ENCODE measurements at regions of chr20 and their contacts with region 1.

Region 1: GRCh38 chr20:1764136-1765033 is 106.8 kb upstream of the SIRPG start:
- DNase-seq: peak; percentile 78
- H3K4me3 Mint-ChIP-seq: no peak overlapping the region
- H3K27ac Mint-ChIP-seq: no peak overlapping the region
- H3K4me1 Mint-ChIP-seq: peaks cover 3% of the 10 kb centered on the region
- H3K27me3 Mint-ChIP-seq: peaks cover 4% of the 10 kb centered on the region

Region 2: GRCh38 chr20:1509237-1509636 is 255.1 kb before region 1 on chr20:
- CTCF ChIA-PET with region 1: interaction called, 13 read pairs
- POLR2A ChIA-PET with region 1: no interaction called
- intact Hi-C with region 1: no loop called
- DNase-seq: peak; percentile 39
- H3K4me3 Mint-ChIP-seq: no peak overlapping the region
- H3K27ac Mint-ChIP-seq: no peak overlapping the region
- H3K4me1 Mint-ChIP-seq: no peaks in the 10 kb centered on the region
- H3K27me3 Mint-ChIP-seq: peaks cover 9% of the 10 kb centered on the region

Region 3: DNA sequence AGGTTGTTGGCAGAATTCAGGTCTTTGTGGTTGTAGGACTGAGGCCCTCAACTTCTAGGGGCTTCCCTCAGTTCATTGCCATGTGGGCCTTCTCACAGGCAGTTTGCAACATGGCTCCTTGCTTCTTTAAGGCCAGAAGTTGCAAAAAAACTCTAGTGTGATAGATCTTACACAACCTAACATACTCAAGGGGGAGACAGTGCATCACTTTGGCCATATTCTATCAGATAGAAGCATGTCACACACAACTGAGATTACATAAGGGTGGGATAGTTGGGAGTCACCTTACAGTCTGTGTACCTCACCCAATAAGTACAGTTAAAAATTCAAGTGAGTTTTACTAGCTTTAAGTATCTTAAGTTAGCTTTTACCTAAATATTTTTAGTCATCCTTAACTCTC is 208.4 kb before region 1 on chr20:
- CTCF ChIA-PET with region 1: interaction called, 14 read pairs
- POLR2A ChIA-PET with region 1: no interaction called
- intact Hi-C with region 1: no loop called
- DNase-seq: no peak
- H3K4me3 Mint-ChIP-seq: no peak overlapping the region
- H3K27ac Mint-ChIP-seq: no peak overlapping the region
- H3K4me1 Mint-ChIP-seq: peaks cover 3% of the 10 kb centered on the region
- H3K27me3 Mint-ChIP-seq: no peaks in the 10 kb centered on the region

Region 4: GRCh38 chr20:1752045-1752444 is 12.3 kb before region 1 on chr20:
- CTCF ChIA-PET with region 1: interaction called, 11 read pairs
- POLR2A ChIA-PET with region 1: no interaction called
- intact Hi-C with region 1: no loop called
- DNase-seq: no peak
- H3K4me3 Mint-ChIP-seq: no peak overlapping the region
- H3K27ac Mint-ChIP-seq: no peak overlapping the region
- H3K4me1 Mint-ChIP-seq: no peaks in the 10 kb centered on the region
- H3K27me3 Mint-ChIP-seq: no peaks in the 10 kb centered on the region

Region 5: DNA sequence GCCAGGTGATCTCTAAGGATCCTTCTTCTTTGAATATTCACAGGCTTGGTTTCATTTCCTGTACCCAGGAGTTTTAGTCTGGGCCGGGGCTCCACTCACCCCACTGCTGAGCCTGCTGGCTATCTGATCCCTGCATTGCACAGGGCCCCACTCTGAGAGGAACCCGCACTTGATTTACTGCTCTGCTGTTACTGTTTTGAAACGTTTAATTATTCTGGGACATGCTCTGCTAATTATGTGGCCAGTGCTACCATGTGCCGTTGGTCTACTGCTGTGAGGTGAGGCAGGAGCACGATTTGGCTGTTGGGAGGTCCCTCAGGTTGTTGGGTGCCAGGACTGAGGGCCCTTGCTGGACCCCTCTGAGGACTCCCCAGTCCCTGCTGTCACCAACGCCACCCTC is 22.1 kb after region 1 on chr20:
- CTCF ChIA-PET with region 1: no interaction called
- POLR2A ChIA-PET with region 1: no interaction called
- intact Hi-C with region 1: no loop called
- DNase-seq: no peak
- H3K4me3 Mint-ChIP-seq: no peak overlapping the region
- H3K27ac Mint-ChIP-seq: no peak overlapping the region
- H3K4me1 Mint-ChIP-seq: no peaks in the 10 kb centered on the region
- H3K27me3 Mint-ChIP-seq: peaks cover 41% of the 10 kb centered on the region

Measured in activated CD4-positive, alpha-beta memory T cell treated with anti-CD3 and anti-CD28 coated beads for 36 hours (primary cell).